CD4-positive, alpha-beta T cell (primary cell): ENCODE measurements at regions of chr3 and their contacts with region 1.

Region 1: DNA sequence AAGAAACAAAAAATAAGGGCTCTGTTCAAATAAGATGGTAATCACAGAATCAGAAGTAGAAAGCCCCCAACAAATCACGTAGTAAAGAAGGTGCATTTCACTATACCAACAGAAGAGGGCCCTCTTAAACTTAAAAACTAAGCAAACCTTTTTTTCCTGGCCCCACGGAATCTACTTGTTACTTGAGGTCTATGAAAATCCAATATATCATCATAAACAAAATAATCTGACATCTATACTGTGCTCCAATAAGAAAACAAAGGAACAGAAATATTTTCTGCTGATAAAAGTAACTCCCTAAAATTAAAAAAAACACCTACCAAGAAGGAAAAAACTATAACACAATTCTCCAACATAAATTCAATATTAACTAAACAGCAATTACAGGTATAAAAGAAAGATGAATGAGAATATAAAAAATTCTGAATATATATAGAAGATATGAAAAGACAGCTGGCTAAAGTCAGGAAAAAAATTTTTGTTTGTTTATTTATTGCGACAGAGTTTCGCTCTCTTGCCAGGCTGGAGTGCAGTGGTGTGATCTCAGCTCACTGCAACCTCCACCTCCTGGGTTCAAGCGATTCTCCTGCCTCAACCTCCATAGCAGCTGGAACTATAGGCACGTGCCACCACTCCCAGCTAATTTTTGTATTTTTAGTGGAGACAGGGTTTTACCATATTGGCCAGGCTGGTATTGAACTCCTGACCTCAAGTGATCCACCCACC is 81.8 kb downstream of the CLASP2 start:
- DNase-seq: peak in 3 of 14 experiments; percentile 34 to 64 (median 57)
- ATAC-seq: peak; percentile 60
- H3K4me3 ChIP-seq: no peak overlapping the region
- H3K4me3 Mint-ChIP-seq: no peak overlapping the region
- H3K27ac ChIP-seq: no peak overlapping the region
- H3K27ac Mint-ChIP-seq: no peak overlapping the region
- H3K4me1 ChIP-seq: no peaks in the 10 kb centered on the region
- H3K4me1 Mint-ChIP-seq: no peaks in the 10 kb centered on the region
- H3K27me3 ChIP-seq: no peaks in the 10 kb centered on the region
- H3K27me3 Mint-ChIP-seq: no peaks in the 10 kb centered on the region
- CTCF ChIP-seq: peak; percentile 56

Region 2: GRCh38 chr3:33777996-33778395 is 141.7 kb after region 1 on chr3:
- CTCF ChIA-PET with region 1: no interaction called
- POLR2A ChIA-PET with region 1: no interaction called
- intact Hi-C with region 1: loop called (anchors 2 kb)
- DNase-seq: no peak
- ATAC-seq: no peak
- H3K4me3 ChIP-seq: no peak overlapping the region
- H3K4me3 Mint-ChIP-seq: no peak overlapping the region
- H3K27ac ChIP-seq: no peak overlapping the region
- H3K27ac Mint-ChIP-seq: no peak overlapping the region
- H3K4me1 ChIP-seq: no peaks in the 10 kb centered on the region
- H3K4me1 Mint-ChIP-seq: no peaks in the 10 kb centered on the region
- H3K27me3 ChIP-seq: no peaks in the 10 kb centered on the region
- H3K27me3 Mint-ChIP-seq: no peaks in the 10 kb centered on the region
- CTCF ChIP-seq: no peak